PC-3 (cell line): ENCODE measurements at regions of chrX and their contacts with region 1.

Region 1: DNA sequence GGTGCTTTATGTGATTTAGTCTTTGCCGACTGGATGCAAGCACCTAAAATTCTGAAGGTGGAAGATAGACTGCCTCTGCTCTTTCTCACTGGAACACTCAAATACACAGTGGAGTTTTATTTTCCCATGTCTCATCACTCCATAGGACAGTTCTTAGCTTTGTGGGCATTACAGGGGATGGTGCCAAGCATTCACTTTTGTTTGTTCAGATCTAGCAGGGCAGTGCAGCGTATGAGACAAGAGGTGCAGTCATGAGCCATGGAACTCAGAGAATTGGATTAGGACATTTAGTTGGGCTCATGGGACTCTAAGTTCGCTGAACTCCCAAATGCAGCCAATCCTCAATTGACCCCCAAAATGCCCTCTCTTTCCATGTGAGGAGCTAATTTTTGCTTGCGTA is 1136.9 kb upstream of the PRKX start:
- DNase-seq: no peak
- ATAC-seq: no peak
- H3K4me3 ChIP-seq: no peak overlapping the region
- H3K27ac ChIP-seq: no peak overlapping the region
- H3K4me1 ChIP-seq: peaks cover 22% of the 10 kb centered on the region
- H3K27me3 ChIP-seq: no peaks in the 10 kb centered on the region
- CTCF ChIP-seq: no peak

Region 2: DNA sequence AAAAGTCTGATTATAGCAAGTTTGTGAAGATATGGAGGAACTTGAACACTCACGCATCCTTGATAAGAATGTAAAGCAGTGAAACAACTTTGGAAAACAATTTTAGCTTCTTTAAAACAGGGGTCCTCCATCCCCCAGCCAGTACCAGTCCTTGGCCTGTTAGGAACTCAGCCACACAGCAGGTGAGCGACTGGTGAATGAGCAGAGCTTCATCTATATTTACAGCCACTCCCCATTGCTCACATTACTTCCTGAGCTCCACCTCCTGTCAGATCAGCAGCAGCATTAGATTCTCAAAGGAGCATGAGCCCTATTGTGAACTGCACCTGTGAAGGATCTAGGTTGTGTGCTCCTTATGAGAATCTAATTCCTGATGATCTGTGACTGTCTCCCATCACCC is 606.6 kb before region 1 on chrX:
- CTCF ChIA-PET with region 1: no interaction called
- POLR2A ChIA-PET with region 1: no interaction called
- intact Hi-C with region 1: no loop called
- DNase-seq: no peak
- ATAC-seq: no peak
- H3K4me3 ChIP-seq: no peak overlapping the region
- H3K27ac ChIP-seq: no peak overlapping the region
- H3K4me1 ChIP-seq: no peaks in the 10 kb centered on the region
- H3K27me3 ChIP-seq: peaks cover 10% of the 10 kb centered on the region; the same call in 1 of the 2 replicates
- CTCF ChIP-seq: no peak

Region 3: GRCh38 chrX:4787987-4788386 is 62.3 kb before region 1 on chrX:
- CTCF ChIA-PET with region 1: no interaction called
- POLR2A ChIA-PET with region 1: no interaction called
- intact Hi-C with region 1: loop called (anchors 2 kb)
- DNase-seq: peak; percentile 54
- ATAC-seq: peak; percentile 90
- H3K4me3 ChIP-seq: no peak overlapping the region
- H3K27ac ChIP-seq: no peak overlapping the region
- H3K4me1 ChIP-seq: no peaks in the 10 kb centered on the region
- H3K27me3 ChIP-seq: no peaks in the 10 kb centered on the region
- CTCF ChIP-seq: peak; percentile 50

Region 4: GRCh38 chrX:5051831-5052491 is 201.6 kb after region 1 on chrX:
- CTCF ChIA-PET with region 1: no interaction called
- POLR2A ChIA-PET with region 1: no interaction called
- intact Hi-C with region 1: loop called (anchors 5 kb)
- DNase-seq: peak; percentile 95
- ATAC-seq: peak; percentile 95
- H3K4me3 ChIP-seq: peak overlapping the region; percentile 19; the same call in 1 of the 2 replicates
- H3K27ac ChIP-seq: peak overlapping the region; percentile 70
- H3K4me1 ChIP-seq: peaks cover 10% of the 10 kb centered on the region
- H3K27me3 ChIP-seq: no peaks in the 10 kb centered on the region
- CTCF ChIP-seq: no peak